ENCODE measurements at regions of chr1 and their contacts with region 1.

Region 1: DNA sequence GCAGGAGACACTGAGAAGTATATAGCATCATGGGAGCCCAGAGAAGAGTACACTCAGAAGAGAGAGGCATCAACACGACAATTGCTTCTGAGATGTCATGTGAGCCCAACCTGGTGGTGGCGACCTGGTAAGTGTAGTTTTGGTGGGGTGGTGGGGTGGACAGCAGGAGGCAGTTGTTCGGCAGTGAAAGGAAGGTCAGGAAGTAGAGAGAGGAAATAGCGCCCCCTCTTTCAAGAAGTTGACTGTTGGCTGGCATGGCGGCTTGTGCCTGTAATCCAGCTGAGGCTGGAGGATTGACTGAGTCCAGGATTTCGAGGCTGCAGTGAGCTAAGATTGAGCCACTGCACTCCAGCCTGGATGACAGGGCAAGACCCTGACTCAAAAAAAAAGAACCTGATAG is 12.6 kb downstream of the RSPO1 start:
- DNase-seq: no peak
- H3K4me3 ChIP-seq: no peak overlapping the region
- H3K27ac ChIP-seq: no peak overlapping the region
- H3K4me1 ChIP-seq: no peaks in the 10 kb centered on the region
- H3K27me3 ChIP-seq: peaks cover 0 to 4% of the 10 kb centered on the region in 2 experiments
- CTCF ChIP-seq: no peak
- POLR2A ChIP-seq: no peak

Region 2: GRCh38 chr1:37602750-37603694 is 19.1 kb before region 1 on chr1:
- CTCF ChIA-PET with region 1: interaction called, 20 read pairs
- POLR2A ChIA-PET with region 1: no interaction called
- dilution Hi-C with region 1: no loop called
- intact Hi-C with region 1: loop called (anchors 1 kb)
- DNase-seq: peak; percentile 20
- H3K4me3 ChIP-seq: no peak overlapping the region
- H3K27ac ChIP-seq: no peak overlapping the region
- H3K4me1 ChIP-seq: no peaks in the 10 kb centered on the region
- H3K27me3 ChIP-seq: peaks cover 8 to 24% of the 10 kb centered on the region in 2 experiments
- CTCF ChIP-seq: peak; percentile 67
- POLR2A ChIP-seq: no peak

Measured in endothelial cell of umbilical vein (primary cell).